ENCODE measurements at regions of chr10 and their contacts with region 1.

Region 1: DNA sequence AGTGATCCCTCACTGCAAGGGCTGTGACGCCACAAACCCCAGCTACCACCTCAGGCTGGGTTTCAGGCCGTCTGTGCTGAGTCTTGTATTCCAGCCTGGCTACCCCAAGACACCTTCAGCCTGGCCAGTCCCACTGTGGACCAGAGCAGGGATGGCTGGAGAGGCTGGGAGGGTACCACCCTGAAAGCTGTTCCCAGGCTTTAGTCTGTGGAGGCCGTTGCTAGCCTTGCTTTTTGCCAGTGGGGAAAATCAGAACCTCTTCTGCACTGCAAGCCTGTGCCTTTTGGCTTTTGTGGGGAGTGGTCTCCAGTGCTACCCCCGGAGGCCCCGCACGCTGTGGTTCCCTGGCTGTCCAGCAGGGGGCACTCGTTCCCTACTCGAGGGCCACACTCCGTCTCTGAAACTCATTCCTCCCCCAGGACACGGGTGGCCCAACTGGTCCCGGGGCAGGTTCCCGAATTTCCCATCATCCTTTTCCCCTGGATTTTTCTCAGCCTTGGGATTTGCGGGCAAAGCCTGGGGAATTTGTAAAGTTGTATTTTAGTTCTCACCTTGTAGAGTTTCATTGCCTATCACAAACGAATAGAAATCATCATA is 128.4 kb upstream of the BTBD16 start:
- DNase-seq: no peak
- H3K4me3 ChIP-seq: no peak overlapping the region
- H3K27me3 ChIP-seq: no peaks in the 10 kb centered on the region
- CTCF ChIP-seq: peak; percentile 95

Region 2: DNA sequence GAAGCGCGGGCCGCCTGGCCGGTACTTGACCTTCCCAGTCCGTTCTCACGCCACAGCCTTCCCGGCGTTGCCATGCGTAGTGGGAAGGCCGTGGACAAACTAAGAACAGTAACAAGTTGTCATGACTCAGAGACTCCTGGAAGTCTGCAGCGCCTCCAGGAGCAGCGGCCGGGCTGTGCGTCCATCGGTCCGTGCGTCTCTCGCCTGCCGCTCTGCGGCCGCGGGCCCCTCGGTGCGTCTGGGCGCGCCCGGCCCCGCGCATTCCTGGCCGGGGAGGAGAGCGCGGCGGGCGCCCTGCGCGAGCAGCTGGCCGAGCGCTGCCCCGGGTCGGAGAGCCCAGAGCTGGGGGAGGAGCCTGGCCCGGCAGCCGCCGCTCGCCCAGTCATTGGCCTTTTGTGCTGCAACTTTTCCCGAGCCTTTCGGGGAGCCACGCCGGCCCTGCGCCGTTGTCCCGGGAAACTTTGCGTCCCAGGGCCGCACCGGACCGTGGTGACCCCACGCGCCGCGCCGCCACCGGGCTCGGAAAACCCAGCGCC is 30.0 kb before region 1 on chr10:
- CTCF ChIA-PET with region 1: interaction called, 11 read pairs
- POLR2A ChIA-PET with region 1: no interaction called
- DNase-seq: peak; percentile 85
- H3K4me3 ChIP-seq: peak overlapping the region; percentile 81
- H3K27me3 ChIP-seq: no peaks in the 10 kb centered on the region
- CTCF ChIP-seq: peak; percentile 54

Region 3: GRCh38 chr10:122154545-122155366 is 12.0 kb after region 1 on chr10:
- CTCF ChIA-PET with region 1: interaction called, 11 read pairs
- POLR2A ChIA-PET with region 1: no interaction called
- DNase-seq: no peak
- H3K4me3 ChIP-seq: peak overlapping the region; percentile 27
- H3K27me3 ChIP-seq: no peaks in the 10 kb centered on the region
- CTCF ChIP-seq: peak; percentile 25; the same call in 1 of the 2 replicates

Region 4: GRCh38 chr10:122267849-122268737 is 125.4 kb after region 1 on chr10:
- CTCF ChIA-PET with region 1: interaction called, 20 read pairs
- POLR2A ChIA-PET with region 1: no interaction called
- DNase-seq: no peak
- H3K4me3 ChIP-seq: no peak overlapping the region
- H3K27me3 ChIP-seq: no peaks in the 10 kb centered on the region
- CTCF ChIP-seq: peak; percentile 98